ENCODE measurements at regions of chr5 and their contacts with region 1.

Region 1: DNA sequence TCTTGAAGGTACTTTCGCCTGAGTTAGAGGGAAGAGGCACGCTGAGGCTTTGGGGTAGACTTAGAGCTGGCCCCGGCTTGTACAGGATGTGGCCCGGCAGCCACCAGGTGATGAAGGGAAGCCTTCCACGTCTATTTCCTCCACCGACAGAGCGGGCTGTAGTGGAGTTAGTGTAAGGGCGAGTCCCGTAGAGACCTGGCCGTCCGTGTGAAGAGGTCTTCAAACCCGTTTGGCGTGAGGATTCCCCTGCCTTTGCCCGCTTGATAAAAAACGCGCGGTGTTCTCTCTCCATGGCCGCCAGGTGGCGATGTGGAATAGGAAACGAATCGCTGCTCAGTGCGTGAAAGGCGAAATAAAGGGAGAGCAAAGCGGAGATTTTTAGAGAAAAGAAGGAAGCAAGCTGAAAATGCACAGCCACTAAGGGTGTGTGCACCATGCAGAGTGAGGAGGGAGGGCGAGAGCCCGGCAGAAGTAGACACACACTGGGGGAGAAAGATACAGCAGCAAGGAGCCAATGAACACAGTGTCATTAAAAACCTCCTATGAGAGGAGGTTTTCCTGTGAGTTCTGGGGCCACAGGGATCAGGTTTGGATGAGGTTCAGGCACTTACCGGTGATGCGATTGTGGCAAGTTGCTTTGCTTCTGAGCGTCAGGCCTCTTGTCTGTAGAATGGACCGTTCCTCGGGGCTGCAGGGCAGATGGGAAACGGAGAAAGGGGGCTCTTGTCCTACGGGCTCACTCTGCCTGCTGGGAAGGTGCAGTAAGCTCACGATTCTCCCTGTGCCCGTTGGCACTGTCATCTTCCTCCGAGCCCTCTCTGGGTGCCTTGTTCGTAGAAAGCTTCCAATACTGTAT is 34.2 kb downstream of the STC2 start:
- DNase-seq: peak; percentile 67 to 73 (median 68)
- ATAC-seq: peak; percentile 74 to 92 (median 88)
- H3K4me3 ChIP-seq: no peak overlapping the region
- H3K27ac ChIP-seq: no peak overlapping the region
- H3K4me1 ChIP-seq: no peaks in the 10 kb centered on the region
- H3K27me3 ChIP-seq: peaks cover 0 to 10% of the 10 kb centered on the region in 2 donors
- CTCF ChIP-seq: peak; percentile 81 to 88 (median 82)
- POLR2A ChIP-seq: no peak

Region 2: DNA sequence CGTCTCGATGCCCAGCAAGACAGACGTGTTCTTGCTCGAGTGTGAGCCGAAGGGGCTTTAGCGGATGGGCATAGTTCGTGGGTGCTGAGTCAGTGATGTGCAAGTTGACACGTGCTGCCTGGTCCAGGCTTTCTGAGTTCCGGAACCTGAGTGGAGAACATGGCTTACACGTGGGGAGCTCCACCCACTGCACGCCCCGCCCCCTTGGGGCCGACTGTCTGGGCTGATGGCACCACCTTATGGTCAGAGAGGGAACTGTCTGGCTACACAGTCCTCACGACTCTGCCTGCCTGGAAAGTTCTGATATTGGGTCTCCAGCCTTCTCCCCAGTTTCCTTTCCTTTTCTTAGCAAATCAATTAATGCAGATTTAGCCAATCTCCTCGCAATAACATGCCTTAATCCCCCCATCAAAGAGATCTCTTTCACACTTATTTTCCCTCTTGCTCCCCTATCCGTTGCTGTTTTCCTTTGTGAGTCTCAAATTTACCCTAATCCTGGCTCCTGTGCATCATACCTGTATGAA is 38.0 kb after region 1 on chr5:
- intact Hi-C with region 1: loop called (anchors 5 kb)
- DNase-seq: peak; percentile 79 to 86 (median 84)
- ATAC-seq: peak; percentile 82 to 98 (median 98)
- H3K4me3 ChIP-seq: no peak overlapping the region
- H3K27ac ChIP-seq: no peak overlapping the region
- H3K4me1 ChIP-seq: peaks cover 0 to 20% (median 0%) of the 10 kb centered on the region in 4 donors
- H3K27me3 ChIP-seq: peaks cover 0 to 10% of the 10 kb centered on the region in 2 donors
- CTCF ChIP-seq: peak; percentile 80 to 93 (median 92)
- POLR2A ChIP-seq: no peak

Region 3: GRCh38 chr5:173378727-173379126 is 84.7 kb after region 1 on chr5:
- intact Hi-C with region 1: no loop called
- DNase-seq: no peak
- ATAC-seq: no peak
- H3K4me3 ChIP-seq: no peak overlapping the region
- H3K27ac ChIP-seq: no peak overlapping the region
- H3K4me1 ChIP-seq: no peaks in the 10 kb centered on the region
- H3K27me3 ChIP-seq: no peaks in the 10 kb centered on the region
- CTCF ChIP-seq: no peak
- POLR2A ChIP-seq: no peak

Region 4: DNA sequence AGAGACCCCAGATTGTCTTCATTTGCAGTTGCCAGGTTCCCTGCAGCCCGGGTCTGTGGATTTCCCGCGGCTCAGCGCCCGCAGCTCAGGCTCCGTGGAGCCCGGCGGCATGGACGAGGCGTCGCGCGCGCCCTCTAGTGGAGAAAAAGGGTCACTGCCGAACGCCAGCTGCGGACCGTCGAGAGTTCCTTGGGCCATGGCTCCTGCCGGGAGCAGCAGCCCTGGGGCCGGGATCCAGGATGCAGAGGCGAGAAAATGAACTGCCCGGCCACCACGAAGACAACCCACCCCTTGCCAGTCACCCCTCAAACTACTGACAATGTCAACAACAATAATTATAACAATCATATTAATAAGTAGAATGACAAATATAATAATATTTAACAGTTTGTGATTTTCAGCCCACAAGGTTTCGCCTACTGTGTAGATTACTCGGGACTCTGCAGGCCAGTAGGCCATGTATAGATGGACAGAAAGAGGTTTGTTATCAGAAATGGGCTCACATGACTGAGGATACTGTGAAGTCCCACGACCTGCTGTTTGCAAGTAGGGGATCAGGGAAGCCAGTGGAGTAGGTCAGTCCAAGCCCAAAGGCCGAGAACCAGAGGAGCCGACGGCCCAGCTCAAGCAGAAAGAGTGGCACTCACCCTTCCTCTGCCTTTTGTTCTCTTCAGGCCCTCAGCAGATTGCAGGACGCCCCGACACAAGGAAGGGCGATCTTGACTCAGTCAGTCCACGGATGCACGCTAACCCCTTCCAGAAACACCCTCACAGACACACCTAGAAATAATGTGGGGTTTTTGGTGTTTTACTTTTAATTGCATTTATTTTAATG is 279.3 kb after region 1 on chr5:
- intact Hi-C with region 1: loop called (anchors 5 to 10 kb)
- DNase-seq: peak; percentile 81 to 83 (median 82)
- ATAC-seq: peak; percentile 94 to 99 (median 98)
- H3K4me3 ChIP-seq: no peak overlapping the region
- H3K27ac ChIP-seq: no peak overlapping the region
- H3K4me1 ChIP-seq: no peaks in the 10 kb centered on the region
- H3K27me3 ChIP-seq: no peaks in the 10 kb centered on the region
- CTCF ChIP-seq: peak; percentile 88 to 99 (median 98)
- POLR2A ChIP-seq: no peak

Region 5: GRCh38 chr5:174045470-174046025 is 751.5 kb after region 1 on chr5 and contains the start of gene NSG2:
- intact Hi-C with region 1: no loop called
- DNase-seq: peak; percentile 87 to 90 (median 89)
- ATAC-seq: peak; percentile 97 to 100 (median 100)
- H3K4me3 ChIP-seq: no peak within 1 kb of the TSS
- H3K27ac ChIP-seq: no peak within 1 kb of the TSS
- H3K4me1 ChIP-seq: peaks cover 0 to 8% (median 2%) of the 10 kb centered on the region in 4 donors
- H3K27me3 ChIP-seq: no peaks in the 10 kb centered on the region
- CTCF ChIP-seq: peak; percentile 61 to 80 (median 76)
- POLR2A ChIP-seq: no peak
- total RNA-seq, gene NSG2: 0.13 TPM in 1 of 6 experiments, not detected in the others